ENCODE measurements at regions of chr5 and their contacts with region 1.

Region 1: GRCh38 chr5:122500245-122501075 is 188.4 kb downstream of the SNCAIP start:
- DNase-seq: no peak
- H3K4me3 ChIP-seq: no peak overlapping the region
- H3K27ac ChIP-seq: no peak overlapping the region
- H3K4me1 ChIP-seq: peaks cover 0 to 3% (median 0%) of the 10 kb centered on the region in 4 donors
- H3K27me3 ChIP-seq: no peaks in the 10 kb centered on the region
- CTCF ChIP-seq: peak in 3 of 5 experiments; percentile 15 to 36 (median 27)
- EP300 ChIP-seq: no peak
- POLR2A ChIP-seq: no peak

Region 2: DNA sequence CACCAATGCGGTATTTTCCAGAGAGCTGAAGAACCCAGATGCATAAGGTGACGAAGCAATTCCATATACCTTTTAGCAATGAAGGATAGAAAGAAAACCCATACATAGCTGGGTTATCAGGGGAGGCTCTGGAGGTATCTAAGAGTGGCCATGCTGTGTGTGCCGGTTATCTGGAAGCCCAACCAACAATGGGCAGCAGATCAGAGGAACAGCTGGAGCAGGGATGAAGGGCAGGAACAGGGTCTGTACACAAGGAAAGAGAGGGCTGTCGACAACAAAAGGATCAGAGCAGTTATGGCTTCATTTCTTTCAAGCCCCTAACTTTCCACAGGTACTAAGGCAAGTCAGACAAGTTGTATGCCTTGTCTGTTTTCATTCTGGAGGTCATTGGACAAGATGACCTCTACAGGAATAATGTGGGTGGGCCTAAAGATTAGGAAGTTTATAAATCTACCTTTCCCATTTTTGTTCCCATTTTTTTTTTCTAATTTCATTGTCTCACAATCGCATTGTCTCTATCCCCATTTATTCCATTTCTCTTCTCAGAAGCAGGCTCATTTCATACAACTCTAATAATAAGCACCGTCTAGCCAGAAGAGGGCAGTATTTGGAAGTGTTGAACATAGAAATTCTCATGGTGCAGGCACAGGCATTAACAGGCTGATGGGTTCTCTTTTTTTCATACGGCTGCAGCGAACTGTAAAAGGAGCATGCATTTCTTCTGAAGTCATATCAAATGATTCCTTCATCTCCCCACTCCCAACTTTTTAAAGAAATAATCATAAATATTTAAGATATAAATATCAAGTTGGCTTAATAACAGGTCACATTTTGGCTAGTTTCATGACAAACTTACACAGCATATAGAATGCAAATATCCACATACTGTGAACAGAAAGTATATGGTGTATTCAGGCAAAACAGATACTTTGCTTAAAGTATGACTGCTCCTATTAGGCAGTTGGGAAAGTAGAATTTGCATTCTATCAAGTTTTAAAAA is 307.7 kb before region 1 on chr5:
- in situ Hi-C with region 1: loop called in 1 of 4 experiments (anchors 10 kb)
- intact Hi-C with region 1: loop called (anchors 10 kb)
- DNase-seq: no peak
- H3K4me3 ChIP-seq: no peak overlapping the region
- H3K27ac ChIP-seq: no peak overlapping the region
- H3K4me1 ChIP-seq: peaks cover 0 to 12% (median 5%) of the 10 kb centered on the region in 4 donors
- H3K27me3 ChIP-seq: no peaks in the 10 kb centered on the region
- CTCF ChIP-seq: peak; percentile 59 to 70 (median 64)
- EP300 ChIP-seq: no peak
- POLR2A ChIP-seq: no peak

Measured in transverse colon (tissue), 4 donors.